Thyroid gland (tissue), 4 donors: ENCODE measurements at regions of chr16 and their contacts with region 1.

Region 1: GRCh38 chr16:17467923-17468540 is 2.7 kb downstream of the XYLT1 start:
- DNase-seq: peak; percentile 69 to 75
- H3K4me3 ChIP-seq: no peak overlapping the region
- H3K27ac ChIP-seq: no peak overlapping the region
- H3K4me1 ChIP-seq: peaks cover 12 to 23% of the 10 kb centered on the region in 2 donors
- H3K27me3 ChIP-seq: no peaks in the 10 kb centered on the region
- CTCF ChIP-seq: peak in 5 of 6 experiments; percentile 29 to 78 (median 63)
- POLR2A ChIP-seq: no peak

Region 2: GRCh38 chr16:17194190-17194780 is 273.7 kb before region 1 on chr16:
- intact Hi-C with region 1: loop called (anchors 5 kb)
- DNase-seq: peak; percentile 52 to 59
- H3K4me3 ChIP-seq: no peak overlapping the region
- H3K27ac ChIP-seq: no peak overlapping the region
- H3K4me1 ChIP-seq: no peaks in the 10 kb centered on the region
- H3K27me3 ChIP-seq: no peaks in the 10 kb centered on the region
- CTCF ChIP-seq: peak; percentile 32 to 72 (median 44)
- POLR2A ChIP-seq: no peak

Region 3: DNA sequence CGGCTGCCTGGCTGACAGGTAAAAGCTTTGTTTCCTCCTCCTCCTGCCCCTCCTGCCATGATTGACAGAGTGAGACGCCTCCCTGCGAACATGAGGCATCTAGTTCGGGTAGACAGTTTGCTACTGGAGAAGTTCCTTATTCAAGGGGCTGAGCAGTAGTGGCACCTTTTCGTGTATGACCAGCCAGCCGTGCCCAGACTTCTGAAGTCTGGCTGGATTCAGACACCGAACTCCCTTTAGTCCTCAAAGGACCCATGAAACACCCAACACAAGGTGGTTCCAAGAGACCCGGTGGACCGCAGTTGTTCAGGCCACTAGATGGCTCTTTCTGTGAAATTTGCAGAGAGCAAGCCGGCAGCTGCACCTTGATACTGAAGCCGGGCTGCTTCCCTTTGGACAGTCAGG is 190.1 kb before region 1 on chr16:
- intact Hi-C with region 1: loop called (anchors 2 kb)
- DNase-seq: peak; percentile 67 to 71
- H3K4me3 ChIP-seq: no peak overlapping the region
- H3K27ac ChIP-seq: no peak overlapping the region
- H3K4me1 ChIP-seq: peaks cover 6 to 19% of the 10 kb centered on the region in 2 donors
- H3K27me3 ChIP-seq: no peaks in the 10 kb centered on the region
- CTCF ChIP-seq: peak; percentile 10 to 60 (median 55)
- POLR2A ChIP-seq: no peak

Region 4: DNA sequence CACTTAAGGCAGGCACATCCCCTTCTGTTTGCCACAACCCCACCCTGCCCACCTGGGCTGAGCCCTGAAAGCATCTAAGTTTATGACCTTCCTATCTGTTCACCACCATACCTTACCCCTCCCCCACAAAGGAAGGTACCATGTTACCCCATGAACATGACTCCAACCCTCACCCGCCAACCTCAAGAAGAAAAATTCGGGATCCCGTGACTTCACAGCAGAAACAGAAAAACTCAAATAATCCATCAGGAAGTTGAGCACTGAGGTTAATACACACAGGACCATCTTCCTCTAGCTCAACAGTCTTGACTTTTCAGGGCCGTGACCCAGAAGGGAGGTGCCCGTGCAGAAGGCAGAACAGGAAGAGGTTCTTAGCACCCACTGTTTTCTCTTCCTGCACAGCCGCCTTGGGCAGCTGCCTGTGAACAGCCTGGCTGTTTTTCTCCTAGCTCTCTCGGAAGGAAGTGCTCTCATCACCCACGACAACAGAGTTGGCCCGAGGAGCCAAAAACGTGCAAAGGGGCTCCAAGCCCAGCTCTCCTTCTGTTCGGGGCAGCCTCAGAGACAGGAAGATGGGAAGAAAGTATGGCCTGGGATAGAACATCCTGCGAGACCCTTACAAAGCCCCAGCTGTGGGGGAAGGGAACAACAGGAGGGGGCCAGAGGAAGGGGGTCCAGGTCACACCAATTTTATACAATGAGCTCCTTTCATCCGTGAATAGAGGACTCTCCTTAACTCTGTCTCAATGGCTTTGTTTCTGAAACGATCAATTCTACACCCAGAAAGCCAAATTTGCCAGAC is 98.4 kb before region 1 on chr16:
- intact Hi-C with region 1: no loop called
- DNase-seq: peak; percentile 21 to 34
- H3K4me3 ChIP-seq: no peak overlapping the region
- H3K27ac ChIP-seq: peak overlapping the region; percentile 44 to 50 (median 44)
- H3K4me1 ChIP-seq: peaks cover 32 to 50% of the 10 kb centered on the region in 2 donors
- H3K27me3 ChIP-seq: no peaks in the 10 kb centered on the region
- CTCF ChIP-seq: no peak
- POLR2A ChIP-seq: no peak